Breast epithelium (tissue), 4 donors: ENCODE measurements at regions of chr16 and their contacts with region 1.

Region 1: DNA sequence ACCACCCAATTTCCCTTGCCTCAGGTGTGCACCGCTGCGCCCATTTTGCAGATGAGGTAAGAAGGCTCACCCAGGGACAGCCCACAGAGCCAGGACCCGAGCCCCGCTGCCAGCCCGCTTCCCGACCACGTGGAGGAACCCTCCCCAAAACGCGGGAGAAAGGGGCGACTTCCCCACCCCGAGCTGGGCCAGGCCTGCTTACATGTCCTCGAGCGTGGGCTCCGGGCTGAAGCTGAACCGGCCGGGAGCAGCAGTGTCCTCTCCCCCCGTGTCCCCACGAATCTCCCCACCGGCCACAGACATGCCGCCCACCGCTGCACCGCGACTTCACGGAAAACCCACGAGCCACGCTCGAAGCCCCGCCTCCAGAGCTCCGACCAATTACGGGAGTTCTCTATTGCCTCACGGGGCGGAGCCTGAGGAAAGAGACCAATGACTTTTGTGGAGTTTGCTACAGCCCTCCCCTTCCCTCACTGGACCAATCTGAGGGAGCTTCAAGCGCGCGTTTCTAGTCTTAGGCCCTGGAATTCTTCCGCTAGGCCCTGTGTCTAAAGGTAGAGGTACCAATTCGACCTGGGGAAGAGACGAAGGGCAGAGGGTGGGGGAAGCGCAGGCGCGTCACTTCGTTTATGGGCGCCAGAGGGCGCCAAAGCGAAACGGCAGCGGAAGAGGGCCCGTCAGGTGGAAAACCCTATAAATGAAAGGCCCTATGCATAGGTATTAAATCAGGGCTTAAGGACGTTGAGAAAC is at the start of gene DCTPP1:
- DNase-seq: peak; percentile 94 to 98
- H3K4me3 ChIP-seq: peak within 1 kb of the TSS; percentile 51 to 78 (median 75)
- H3K27ac ChIP-seq: peak within 1 kb of the TSS; percentile 79 to 87
- H3K4me1 ChIP-seq: peaks cover 3 to 11% of the 10 kb centered on the region in 2 donors
- H3K27me3 ChIP-seq: no peaks in the 10 kb centered on the region
- CTCF ChIP-seq: peak; percentile 80 to 96 (median 89)
- POLR2A ChIP-seq: no peak
- total RNA-seq, gene DCTPP1: 11.2 to 25.6 (median 20.1) TPM

Region 2: GRCh38 chr16:30526823-30527635 is 97.2 kb after region 1 on chr16:
- intact Hi-C with region 1: loop called (anchors 10 kb)
- DNase-seq: peak; percentile 98
- H3K4me3 ChIP-seq: peak overlapping the region; percentile 76 to 90 (median 88)
- H3K27ac ChIP-seq: peak overlapping the region; percentile 97 to 98
- H3K4me1 ChIP-seq: peaks cover 0 to 10% of the 10 kb centered on the region in 2 donors
- H3K27me3 ChIP-seq: no peaks in the 10 kb centered on the region
- CTCF ChIP-seq: peak; percentile 40 to 54 (median 53)
- POLR2A ChIP-seq: peak; percentile 4